ENCODE measurements at regions of chr5 and their contacts with region 1.

Region 1: GRCh38 chr5:144566747-144567420 is 396.2 kb downstream of the KCTD16 start:
- DNase-seq: no peak
- ATAC-seq: no peak
- H3K4me3 ChIP-seq: no peak overlapping the region
- H3K27ac ChIP-seq: no peak overlapping the region
- H3K4me1 ChIP-seq: no peaks in the 10 kb centered on the region
- H3K27me3 ChIP-seq: no peaks in the 10 kb centered on the region
- CTCF ChIP-seq: no peak

Region 2: DNA sequence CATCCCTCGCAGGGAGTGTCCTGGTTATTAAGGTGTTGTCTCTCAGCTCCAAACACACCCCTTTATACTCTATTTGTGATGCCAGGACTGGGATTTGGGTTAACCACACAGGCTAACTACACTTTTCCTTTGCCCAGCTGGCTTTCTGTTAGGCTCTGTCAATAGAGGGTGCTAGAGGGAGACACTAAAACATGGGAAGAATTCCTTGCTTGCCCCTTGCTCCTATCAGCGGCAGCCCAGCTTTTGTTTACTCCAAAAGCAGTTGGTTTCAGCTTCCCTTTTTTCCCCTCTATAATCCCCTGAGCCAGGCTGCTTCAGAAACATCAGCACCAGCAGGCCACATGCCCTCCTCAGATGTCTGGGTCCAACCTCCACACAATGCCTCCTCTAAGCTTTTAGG is 99.1 kb before region 1 on chr5:
- CTCF ChIA-PET with region 1: interaction called, 10 read pairs
- POLR2A ChIA-PET with region 1: no interaction called
- in situ Hi-C with region 1: no loop called
- intact Hi-C with region 1: no loop called
- DNase-seq: peak; percentile 12
- ATAC-seq: no peak; the same call in 1 of the 2 replicates
- H3K4me3 ChIP-seq: no peak overlapping the region
- H3K27ac ChIP-seq: no peak overlapping the region
- H3K4me1 ChIP-seq: no peaks in the 10 kb centered on the region
- H3K27me3 ChIP-seq: no peaks in the 10 kb centered on the region
- CTCF ChIP-seq: peak; percentile 65

Measured in Panc1 (cell line).